CD8-positive, alpha-beta T cell (primary cell): ENCODE measurements at regions of chr18 and their contacts with region 1.

Region 1: DNA sequence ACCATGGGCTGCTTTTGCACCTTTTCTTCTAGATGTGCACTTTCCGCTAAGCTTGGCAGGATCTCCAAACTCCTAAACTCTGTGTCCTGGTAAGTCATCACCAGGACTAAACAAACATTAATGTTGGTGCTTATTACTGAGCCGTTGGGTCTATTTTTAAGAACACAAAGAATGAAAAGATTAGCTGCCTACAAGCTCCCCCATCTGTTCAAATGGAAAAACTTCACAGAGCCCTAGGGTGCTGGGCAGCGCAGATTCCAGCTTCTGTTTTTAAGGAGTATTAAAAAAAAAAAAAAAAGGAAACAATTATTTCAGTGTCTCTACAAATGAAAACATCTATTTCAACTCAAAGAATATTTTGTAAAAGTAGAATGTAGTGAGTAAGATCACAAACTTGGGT is 97.8 kb upstream of the AQP4 start:
- DNase-seq: no peak
- ATAC-seq: no peak
- H3K4me3 ChIP-seq: no peak overlapping the region
- H3K4me3 Mint-ChIP-seq: no peak overlapping the region
- H3K27ac ChIP-seq: no peak overlapping the region
- H3K27ac Mint-ChIP-seq: no peak overlapping the region
- H3K4me1 ChIP-seq: no peaks in the 10 kb centered on the region
- H3K4me1 Mint-ChIP-seq: no peaks in the 10 kb centered on the region
- H3K27me3 ChIP-seq: no peaks in the 10 kb centered on the region
- H3K27me3 Mint-ChIP-seq: no peaks in the 10 kb centered on the region
- CTCF ChIP-seq: no peak

Region 2: GRCh38 chr18:26909599-26910290 is 53.5 kb before region 1 on chr18:
- CTCF ChIA-PET with region 1: no interaction called
- POLR2A ChIA-PET with region 1: no interaction called
- intact Hi-C with region 1: loop called in 1 of 2 experiments (anchors 10 kb)
- DNase-seq: no peak
- ATAC-seq: no peak
- H3K4me3 ChIP-seq: no peak overlapping the region
- H3K4me3 Mint-ChIP-seq: no peak overlapping the region
- H3K27ac ChIP-seq: no peak overlapping the region
- H3K27ac Mint-ChIP-seq: no peak overlapping the region
- H3K4me1 ChIP-seq: no peaks in the 10 kb centered on the region
- H3K4me1 Mint-ChIP-seq: no peaks in the 10 kb centered on the region
- H3K27me3 ChIP-seq: no peaks in the 10 kb centered on the region
- H3K27me3 Mint-ChIP-seq: no peaks in the 10 kb centered on the region
- CTCF ChIP-seq: no peak

Region 3: GRCh38 chr18:27249932-27250331 is 286.6 kb after region 1 on chr18:
- CTCF ChIA-PET with region 1: no interaction called
- POLR2A ChIA-PET with region 1: no interaction called
- intact Hi-C with region 1: no loop called
- DNase-seq: no peak
- ATAC-seq: no peak
- H3K4me3 ChIP-seq: no peak overlapping the region
- H3K4me3 Mint-ChIP-seq: no peak overlapping the region
- H3K27ac ChIP-seq: no peak overlapping the region
- H3K27ac Mint-ChIP-seq: no peak overlapping the region
- H3K4me1 ChIP-seq: no peaks in the 10 kb centered on the region
- H3K4me1 Mint-ChIP-seq: no peaks in the 10 kb centered on the region
- H3K27me3 ChIP-seq: no peaks in the 10 kb centered on the region
- H3K27me3 Mint-ChIP-seq: no peaks in the 10 kb centered on the region
- CTCF ChIP-seq: no peak

Region 4: GRCh38 chr18:27263369-27263768 is 300.1 kb after region 1 on chr18:
- CTCF ChIA-PET with region 1: no interaction called
- POLR2A ChIA-PET with region 1: no interaction called
- intact Hi-C with region 1: no loop called
- DNase-seq: no peak
- ATAC-seq: no peak
- H3K4me3 ChIP-seq: no peak overlapping the region
- H3K4me3 Mint-ChIP-seq: no peak overlapping the region
- H3K27ac ChIP-seq: no peak overlapping the region
- H3K27ac Mint-ChIP-seq: no peak overlapping the region
- H3K4me1 ChIP-seq: no peaks in the 10 kb centered on the region
- H3K4me1 Mint-ChIP-seq: no peaks in the 10 kb centered on the region
- H3K27me3 ChIP-seq: no peaks in the 10 kb centered on the region
- H3K27me3 Mint-ChIP-seq: no peaks in the 10 kb centered on the region
- CTCF ChIP-seq: no peak

Region 5: DNA sequence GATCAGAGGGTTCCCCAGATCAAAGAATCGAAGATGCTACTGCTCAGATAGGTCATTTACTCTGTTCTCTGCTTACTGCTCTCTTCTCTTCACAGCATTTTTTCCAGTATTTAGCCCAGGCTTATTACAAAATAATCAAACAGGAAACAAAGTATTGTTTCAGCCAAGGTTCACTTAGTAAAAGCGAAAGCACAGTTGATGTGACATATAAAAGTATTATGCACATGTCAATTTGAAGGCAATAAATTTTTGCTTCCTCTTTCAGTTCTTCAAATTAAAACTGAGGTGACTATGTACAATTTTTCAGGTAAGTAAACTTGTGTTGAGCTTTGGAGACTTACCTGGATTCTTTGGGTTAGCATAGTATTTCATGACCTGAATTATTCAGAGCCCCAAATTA is 484.6 kb after region 1 on chr18:
- CTCF ChIA-PET with region 1: no interaction called
- POLR2A ChIA-PET with region 1: no interaction called
- intact Hi-C with region 1: no loop called
- DNase-seq: no peak
- ATAC-seq: no peak
- H3K4me3 ChIP-seq: no peak overlapping the region
- H3K4me3 Mint-ChIP-seq: no peak overlapping the region
- H3K27ac ChIP-seq: no peak overlapping the region
- H3K27ac Mint-ChIP-seq: no peak overlapping the region
- H3K4me1 ChIP-seq: no peaks in the 10 kb centered on the region
- H3K4me1 Mint-ChIP-seq: no peaks in the 10 kb centered on the region
- H3K27me3 ChIP-seq: no peaks in the 10 kb centered on the region
- H3K27me3 Mint-ChIP-seq: no peaks in the 10 kb centered on the region
- CTCF ChIP-seq: no peak